Panc1 (cell line): ENCODE measurements at regions of chr6 and their contacts with region 1.

Region 1: DNA sequence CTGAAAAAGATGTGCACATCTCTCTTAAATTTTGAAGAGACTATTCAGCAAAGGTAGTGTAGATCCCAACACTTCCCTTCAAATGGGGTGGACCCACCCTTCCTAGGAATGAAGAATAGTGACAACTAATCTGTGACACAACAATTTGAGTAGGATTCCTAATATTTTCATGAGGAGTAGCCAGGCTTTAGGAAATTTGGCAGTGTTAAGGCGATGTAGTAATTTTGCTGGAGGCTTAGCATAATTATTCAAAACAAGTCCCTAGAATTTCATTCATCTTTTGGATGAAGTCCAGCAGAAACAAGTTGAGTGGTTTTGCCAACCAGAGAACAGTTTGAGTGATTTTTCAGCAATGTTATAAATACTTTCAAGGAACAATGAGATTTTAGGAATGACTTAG is 52.4 kb downstream of the ELOVL4 start:
- DNase-seq: no peak
- ATAC-seq: no peak
- H3K4me3 ChIP-seq: no peak overlapping the region
- H3K27ac ChIP-seq: no peak overlapping the region
- H3K4me1 ChIP-seq: no peaks in the 10 kb centered on the region
- H3K27me3 ChIP-seq: no peaks in the 10 kb centered on the region
- CTCF ChIP-seq: no peak

Region 2: DNA sequence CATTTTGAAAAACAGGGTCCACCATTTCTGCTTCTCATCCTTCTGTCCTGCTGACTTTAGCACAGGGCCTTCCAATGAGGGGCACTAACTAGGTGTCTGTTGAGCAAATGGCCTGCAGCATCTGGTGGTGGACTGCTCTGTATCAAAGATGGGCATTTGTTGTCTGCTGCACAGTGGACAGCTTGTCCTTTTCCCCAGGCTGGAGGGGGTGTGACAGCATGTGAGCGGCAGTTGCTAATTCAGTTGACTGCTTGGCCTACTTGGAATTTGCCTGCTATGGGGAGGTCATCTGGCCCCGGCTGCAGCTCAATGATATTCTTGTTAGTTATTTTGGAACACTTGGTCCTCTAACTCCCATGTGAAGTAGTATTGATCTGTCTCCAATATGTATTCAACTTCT is 170.1 kb before region 1 on chr6:
- CTCF ChIA-PET with region 1: no interaction called
- POLR2A ChIA-PET with region 1: interaction called, 12 read pairs
- in situ Hi-C with region 1: no loop called
- intact Hi-C with region 1: no loop called
- DNase-seq: no peak
- ATAC-seq: no peak
- H3K4me3 ChIP-seq: no peak overlapping the region
- H3K27ac ChIP-seq: no peak overlapping the region
- H3K4me1 ChIP-seq: no peaks in the 10 kb centered on the region
- H3K27me3 ChIP-seq: no peaks in the 10 kb centered on the region; the same call in 1 of the 2 replicates
- CTCF ChIP-seq: no peak